Naive thymus-derived CD4-positive, alpha-beta T cell (primary cell): ENCODE measurements at regions of chr1 and their contacts with region 1.

Region 1: GRCh38 chr1:17125756-17126237 is 6.5 kb upstream of the PADI2 start:
- DNase-seq: peak; percentile 56 to 84 (median 79)
- ATAC-seq: peak; percentile 80
- H3K4me3 ChIP-seq: no peak overlapping the region
- H3K4me3 Mint-ChIP-seq: no peak overlapping the region
- H3K27ac ChIP-seq: no peak overlapping the region
- H3K27ac Mint-ChIP-seq: peak overlapping the region in 1 of 9 donors; percentile 14
- H3K4me1 ChIP-seq: no peaks in the 10 kb centered on the region
- H3K4me1 Mint-ChIP-seq: peaks cover 0 to 7% (median 5%) of the 10 kb centered on the region in 7 donors
- H3K27me3 ChIP-seq: no peaks in the 10 kb centered on the region
- H3K27me3 Mint-ChIP-seq: peaks cover 0 to 9% (median 4%) of the 10 kb centered on the region in 5 donors

Region 2: GRCh38 chr1:17236779-17237560 is 111.2 kb after region 1 on chr1:
- CTCF ChIA-PET with region 1: interaction called, 130 read pairs
- POLR2A ChIA-PET with region 1: no interaction called
- intact Hi-C with region 1: loop called (anchors 1 kb)
- DNase-seq: peak; percentile 54 to 85 (median 80)
- ATAC-seq: peak; percentile 84
- H3K4me3 ChIP-seq: no peak overlapping the region
- H3K4me3 Mint-ChIP-seq: no peak overlapping the region
- H3K27ac ChIP-seq: no peak overlapping the region
- H3K27ac Mint-ChIP-seq: no peak overlapping the region
- H3K4me1 ChIP-seq: no peaks in the 10 kb centered on the region
- H3K4me1 Mint-ChIP-seq: peaks cover 0 to 8% (median 6%) of the 10 kb centered on the region in 7 donors
- H3K27me3 ChIP-seq: no peaks in the 10 kb centered on the region
- H3K27me3 Mint-ChIP-seq: peaks cover 0 to 8% (median 0%) of the 10 kb centered on the region in 5 donors

Region 3: DNA sequence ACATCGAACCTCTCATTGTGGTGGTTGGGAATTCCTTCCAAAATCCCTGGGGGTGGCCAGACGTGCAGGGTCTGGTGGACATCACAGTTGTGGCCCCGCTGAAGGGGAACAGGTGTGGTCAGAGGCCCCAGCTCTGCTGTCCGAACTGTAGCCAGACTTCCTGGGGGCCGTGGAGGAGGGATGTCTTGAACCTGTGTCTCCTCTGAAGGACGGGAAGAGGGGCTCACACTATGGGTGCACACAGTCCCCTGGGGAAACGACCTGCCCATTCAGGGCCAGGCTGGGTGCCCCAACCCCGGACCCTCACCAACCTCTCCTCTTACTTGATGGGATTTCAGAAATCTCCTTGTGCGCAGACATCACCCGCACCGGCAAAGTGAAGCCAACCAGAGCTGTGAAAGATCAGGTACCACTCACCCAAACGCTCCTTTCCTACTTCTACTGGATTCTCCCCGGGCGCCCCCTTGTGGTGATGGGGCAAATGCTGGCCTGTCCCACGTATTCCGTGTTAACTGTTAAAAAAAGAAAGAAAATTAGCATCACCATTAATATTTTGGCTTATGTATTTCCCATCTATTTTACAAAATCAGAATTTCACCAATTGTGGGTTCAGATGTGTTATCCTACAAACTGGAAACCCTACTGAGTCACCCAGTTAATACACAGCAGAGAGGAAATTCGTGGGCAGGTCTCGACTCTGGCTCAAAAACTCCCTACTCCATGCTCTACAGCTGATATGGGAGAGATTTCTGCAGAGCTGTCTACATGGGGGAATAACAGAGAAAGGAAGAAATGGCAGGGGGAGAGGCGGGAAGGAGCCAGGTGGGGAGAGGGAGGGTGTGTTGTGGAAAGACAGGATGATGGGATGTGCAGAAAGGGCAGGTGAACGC is 210.3 kb after region 1 on chr1:
- CTCF ChIA-PET with region 1: interaction called, 3 read pairs
- POLR2A ChIA-PET with region 1: no interaction called
- intact Hi-C with region 1: loop called (anchors 1 to 5 kb)
- DNase-seq: peak in 8 of 9 donors; percentile 37 to 71 (median 56)
- ATAC-seq: peak; percentile 57
- H3K4me3 ChIP-seq: no peak overlapping the region
- H3K4me3 Mint-ChIP-seq: no peak overlapping the region
- H3K27ac ChIP-seq: no peak overlapping the region
- H3K27ac Mint-ChIP-seq: no peak overlapping the region
- H3K4me1 ChIP-seq: no peaks in the 10 kb centered on the region
- H3K4me1 Mint-ChIP-seq: peaks cover 0 to 5% (median 0%) of the 10 kb centered on the region in 7 donors
- H3K27me3 ChIP-seq: no peaks in the 10 kb centered on the region
- H3K27me3 Mint-ChIP-seq: peaks cover 5 to 33% (median 16%) of the 10 kb centered on the region in 5 donors